ENCODE measurements at regions of chr6 and their contacts with region 1.

Region 1: GRCh38 chr6:22906091-22906555 is 336.8 kb downstream of the HDGFL1 start:
- DNase-seq: peak; percentile 40
- H3K4me3 Mint-ChIP-seq: no peak overlapping the region
- H3K27ac Mint-ChIP-seq: no peak overlapping the region
- H3K4me1 Mint-ChIP-seq: peaks cover 6% of the 10 kb centered on the region
- H3K27me3 Mint-ChIP-seq: no peaks in the 10 kb centered on the region
- CTCF ChIP-seq: peak; percentile 25

Region 2: GRCh38 chr6:21935561-21936028 is 970.5 kb before region 1 on chr6:
- CTCF ChIA-PET with region 1: no interaction called
- POLR2A ChIA-PET with region 1: no interaction called
- intact Hi-C with region 1: loop called (anchors 10 kb)
- DNase-seq: peak; percentile 62
- H3K4me3 Mint-ChIP-seq: no peak overlapping the region
- H3K27ac Mint-ChIP-seq: no peak overlapping the region
- H3K4me1 Mint-ChIP-seq: no peaks in the 10 kb centered on the region
- H3K27me3 Mint-ChIP-seq: no peaks in the 10 kb centered on the region
- CTCF ChIP-seq: peak; percentile 32

Region 3: DNA sequence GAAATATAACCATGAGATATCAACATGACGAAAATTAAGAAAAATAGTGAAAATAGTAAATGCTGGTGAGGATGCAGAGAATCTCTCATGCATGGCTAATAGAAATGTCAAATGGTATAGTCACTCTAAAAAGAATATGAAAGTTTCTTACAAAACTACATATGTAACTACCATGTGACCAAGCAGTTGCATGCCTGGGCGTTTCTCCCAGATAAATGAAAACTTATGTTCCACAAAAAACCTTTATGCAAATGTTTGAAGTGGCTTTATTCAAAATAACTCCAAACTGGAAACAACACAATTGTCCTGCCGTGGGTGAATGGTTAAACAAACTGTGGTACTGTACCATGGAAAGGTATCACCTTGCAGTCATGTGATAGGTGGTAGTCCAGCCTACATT is 224.4 kb before region 1 on chr6:
- CTCF ChIA-PET with region 1: no interaction called
- POLR2A ChIA-PET with region 1: no interaction called
- intact Hi-C with region 1: no loop called
- DNase-seq: no peak
- H3K4me3 Mint-ChIP-seq: no peak overlapping the region
- H3K27ac Mint-ChIP-seq: no peak overlapping the region
- H3K4me1 Mint-ChIP-seq: no peaks in the 10 kb centered on the region
- H3K27me3 Mint-ChIP-seq: no peaks in the 10 kb centered on the region
- CTCF ChIP-seq: no peak

Region 4: DNA sequence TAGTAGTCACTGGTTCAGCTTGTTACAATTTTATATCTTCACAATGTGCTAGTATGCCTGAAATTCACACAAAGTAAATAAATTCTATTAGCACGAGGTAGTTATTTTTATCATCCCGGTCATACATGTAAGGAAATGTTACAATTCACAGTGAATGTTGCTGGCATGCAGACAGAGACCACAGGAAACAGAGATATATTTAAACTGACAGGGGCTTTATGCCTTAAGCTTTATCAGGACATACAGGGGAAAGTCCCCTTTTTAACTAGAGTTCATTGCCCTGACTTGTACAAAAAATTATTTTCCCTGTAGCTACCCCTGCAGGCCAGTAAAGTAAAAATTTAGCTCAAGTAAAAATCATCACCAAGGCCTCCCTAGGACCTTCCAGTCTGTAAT is 507.9 kb after region 1 on chr6:
- CTCF ChIA-PET with region 1: interaction called, 11 read pairs
- POLR2A ChIA-PET with region 1: no interaction called
- intact Hi-C with region 1: no loop called
- DNase-seq: peak; percentile 35
- H3K4me3 Mint-ChIP-seq: no peak overlapping the region
- H3K27ac Mint-ChIP-seq: peak overlapping the region; percentile 23
- H3K4me1 Mint-ChIP-seq: no peaks in the 10 kb centered on the region
- H3K27me3 Mint-ChIP-seq: no peaks in the 10 kb centered on the region
- CTCF ChIP-seq: peak; percentile 37

Measured in MCF 10A (cell line).